GM12878 (cell line): ENCODE measurements at regions of chr19 and their contacts with region 1.

Region 1: DNA sequence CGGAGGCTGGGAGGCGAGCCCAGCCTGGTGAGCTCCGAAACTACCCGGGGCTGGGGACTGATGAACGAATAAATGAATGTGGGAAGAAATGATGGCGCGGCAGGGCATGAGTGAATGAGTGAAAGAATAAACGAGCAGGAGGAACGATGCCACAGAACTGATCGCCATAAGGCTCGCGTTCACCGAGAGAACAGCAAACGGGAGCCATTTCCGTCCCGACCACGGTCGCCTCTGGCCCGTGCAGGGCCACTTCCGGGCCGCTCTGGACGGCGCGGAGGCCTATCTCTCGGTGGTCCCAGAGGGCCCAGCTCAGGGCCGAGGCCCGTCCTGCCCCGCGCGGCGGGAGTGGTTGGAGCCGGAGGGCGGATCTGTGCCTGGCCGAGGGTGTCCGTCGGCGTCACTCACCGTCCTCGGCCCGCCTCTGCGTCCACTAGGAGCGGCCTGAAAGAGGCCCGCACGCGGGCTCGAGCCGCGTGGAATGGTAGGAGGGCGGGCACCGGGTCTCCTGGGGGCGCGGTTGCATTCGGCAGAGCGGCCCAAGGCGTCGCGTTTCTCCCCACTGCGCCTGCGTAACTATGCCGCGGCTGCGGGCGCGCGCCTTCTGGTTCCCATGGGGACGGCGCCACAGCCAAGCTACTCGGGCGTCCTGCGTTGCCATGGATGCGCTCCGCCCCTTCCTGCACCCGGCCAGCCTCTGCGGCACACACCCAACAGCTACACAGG is at the start of gene ZNF497:
- DNase-seq: peak; percentile 86
- ATAC-seq: peak; percentile 95
- H3K4me3 ChIP-seq: peak within 1 kb of the TSS; percentile 79
- H3K27ac ChIP-seq: peak within 1 kb of the TSS; percentile 86
- H3K4me1 ChIP-seq: peaks cover 14% of the 10 kb centered on the region
- H3K27me3 ChIP-seq: no peaks in the 10 kb centered on the region
- CTCF ChIP-seq: peak in 2 of 3 experiments; percentile 5 to 6; a peak in 2 of 6 replicates
- EP300 ChIP-seq: 0 out of 4 replicates have a peak, but pooled peaks of 1 of the 2 experiments have one; percentile 8
- POLR2A ChIP-seq: peak; percentile 78
- RAD21 ChIP-seq: no peak
- polyA plus RNA-seq, gene ZNF497: 0.16 TPM

Region 2: DNA sequence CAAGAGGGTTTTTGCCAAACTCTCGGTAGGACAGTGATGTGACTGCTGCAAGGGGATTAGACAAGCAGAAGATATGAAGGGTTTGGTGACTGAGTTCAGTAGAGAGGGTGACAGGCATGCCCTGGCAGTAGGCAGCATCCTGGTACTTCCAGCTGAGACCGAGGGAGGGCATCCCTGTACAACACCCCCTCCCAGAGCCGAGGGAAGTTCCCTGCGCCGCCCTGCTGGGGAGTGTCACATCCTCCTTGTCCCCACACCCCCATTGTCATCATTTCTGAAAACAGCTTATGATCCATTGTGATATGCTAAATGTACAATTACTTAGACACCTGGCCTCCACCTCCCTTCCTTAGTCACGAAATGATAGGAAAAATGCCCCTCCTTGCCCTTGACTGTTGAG is 119.1 kb before region 1 on chr19:
- CTCF ChIA-PET with region 1: no interaction called
- POLR2A ChIA-PET with region 1: no interaction called
- RAD21 ChIA-PET with region 1: no interaction called
- SMC1A ChIA-PET with region 1: no interaction called
- in situ Hi-C with region 1: no loop called
- intact Hi-C with region 1: no loop called
- DNase-seq: no peak
- ATAC-seq: no peak
- H3K4me3 ChIP-seq: no peak overlapping the region
- H3K27ac ChIP-seq: no peak overlapping the region
- H3K4me1 ChIP-seq: no peaks in the 10 kb centered on the region
- H3K27me3 ChIP-seq: no peaks in the 10 kb centered on the region
- CTCF ChIP-seq: no peak
- EP300 ChIP-seq: no peak
- POLR2A ChIP-seq: no peak
- RAD21 ChIP-seq: no peak

Region 3: DNA sequence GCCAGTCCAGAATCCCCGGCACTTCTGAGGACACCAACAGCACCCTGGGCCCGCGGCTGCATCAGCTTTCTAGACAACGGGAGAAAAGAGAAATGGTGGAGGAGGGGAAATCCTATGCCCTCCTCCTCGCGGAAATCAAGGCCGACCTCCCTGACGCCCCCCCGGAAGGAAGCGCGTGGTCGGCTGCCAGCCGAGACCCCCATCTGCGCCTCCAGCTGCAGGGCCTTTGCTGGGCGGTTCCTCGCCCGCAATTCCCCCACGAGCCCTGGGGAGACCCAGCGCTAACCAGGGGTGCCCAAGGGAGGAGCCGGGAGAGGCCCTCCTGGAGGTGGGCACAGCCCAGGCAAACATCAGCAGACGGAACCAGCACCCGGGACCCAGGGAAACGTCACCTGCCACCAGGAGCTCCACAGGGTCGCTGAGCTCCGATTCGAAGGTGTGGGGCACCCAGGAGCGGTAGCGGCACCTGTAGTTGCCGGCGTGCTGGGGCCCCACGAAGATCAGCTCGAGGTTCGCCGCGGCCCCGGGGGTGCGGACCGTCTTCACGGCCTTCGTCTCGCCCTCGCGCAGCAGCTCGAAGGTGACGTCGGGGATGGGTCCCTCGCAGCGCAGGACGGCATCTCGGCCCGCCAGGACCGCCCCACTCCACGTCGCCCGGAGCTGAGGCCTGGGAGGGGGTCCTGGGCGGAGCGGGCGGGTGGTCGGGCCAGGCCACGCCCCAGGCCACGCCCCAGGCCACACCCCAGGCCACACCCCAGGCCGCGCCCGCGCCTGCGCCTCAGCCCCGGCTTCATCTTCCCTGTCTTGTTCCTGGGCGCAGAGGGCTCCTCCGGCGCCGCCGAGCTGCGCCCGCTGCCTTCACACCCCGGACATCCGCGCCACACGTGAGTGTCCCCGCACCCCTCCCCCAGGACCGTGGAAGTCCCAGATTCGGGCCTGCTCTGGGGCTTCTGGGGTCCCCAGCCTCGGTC is 15.2 kb before region 1 on chr19:
- CTCF ChIA-PET with region 1: interaction called, 13 read pairs
- POLR2A ChIA-PET with region 1: interaction called, 37 read pairs
- RAD21 ChIA-PET with region 1: interaction called, 18 read pairs
- SMC1A ChIA-PET with region 1: interaction called, 17 read pairs
- in situ Hi-C with region 1: no loop called
- intact Hi-C with region 1: no loop called
- DNase-seq: no peak
- ATAC-seq: peak; percentile 98
- H3K4me3 ChIP-seq: peak overlapping the region; percentile 87
- H3K27ac ChIP-seq: peak overlapping the region; percentile 44; the same call in 1 of the 2 replicates
- H3K4me1 ChIP-seq: 0 out of 2 replicates have a peak, but pooled peaks cover 3% of the 10 kb centered on the region
- H3K27me3 ChIP-seq: no peaks in the 10 kb centered on the region
- CTCF ChIP-seq: no peak
- EP300 ChIP-seq: no peak
- POLR2A ChIP-seq: peak; percentile 76
- RAD21 ChIP-seq: no peak

Region 4: DNA sequence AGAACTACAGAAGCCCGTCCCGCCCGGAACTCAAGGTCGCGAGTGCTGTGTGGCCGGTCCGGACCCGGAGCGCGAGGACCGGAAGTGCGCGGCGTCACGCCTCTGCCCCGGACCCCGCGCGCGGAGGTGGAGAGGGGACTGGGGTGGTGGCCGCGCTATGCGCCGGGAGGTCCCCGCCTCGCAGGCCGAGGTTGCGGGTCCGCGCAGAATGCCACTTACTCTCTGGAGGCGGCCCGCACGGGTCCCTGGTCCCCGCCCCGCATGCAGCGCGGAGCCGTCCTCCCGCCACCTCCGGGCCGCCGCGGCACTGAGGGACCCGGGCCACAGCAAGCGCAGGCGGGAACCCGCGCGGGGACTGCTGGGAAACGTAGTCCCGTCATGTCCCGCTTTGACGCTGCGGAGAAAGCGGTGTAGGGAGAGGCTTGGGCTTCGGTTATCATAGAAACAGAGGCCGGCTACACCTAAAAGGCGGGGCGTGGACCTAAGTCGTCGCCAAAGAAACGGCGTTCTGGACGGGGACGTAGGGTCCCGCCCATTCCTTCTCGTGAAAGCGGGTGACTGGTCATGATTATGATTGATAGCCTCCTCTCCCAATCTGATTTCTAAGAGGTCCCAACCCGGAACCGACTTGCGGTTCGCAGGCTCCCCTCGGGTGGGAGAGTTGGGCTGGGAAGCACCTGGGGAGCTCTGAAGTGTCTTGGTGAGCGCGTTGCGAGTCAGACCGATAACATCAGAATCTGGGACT is 18.5 kb after region 1 on chr19 and contains the start of gene ZNF837:
- CTCF ChIA-PET with region 1: interaction called, 8 read pairs
- POLR2A ChIA-PET with region 1: interaction called, 13 read pairs
- RAD21 ChIA-PET with region 1: interaction called, 11 read pairs
- SMC1A ChIA-PET with region 1: interaction called, 10 read pairs
- in situ Hi-C with region 1: no loop called
- intact Hi-C with region 1: loop called (anchors 2 kb)
- DNase-seq: peak; percentile 99
- ATAC-seq: peak; percentile 90
- H3K4me3 ChIP-seq: peak within 1 kb of the TSS; percentile 87
- H3K27ac ChIP-seq: peak within 1 kb of the TSS; percentile 85
- H3K4me1 ChIP-seq: peaks cover 22% of the 10 kb centered on the region
- H3K27me3 ChIP-seq: no peaks in the 10 kb centered on the region
- CTCF ChIP-seq: no peak
- EP300 ChIP-seq: no peak
- POLR2A ChIP-seq: peak; percentile 87
- RAD21 ChIP-seq: no peak
- polyA plus RNA-seq, gene ZNF837: not detected